ENCODE measurements at regions of chr2 and their contacts with region 1.

Region 1: GRCh38 chr2:158456309-158457066 is at the starts of genes CCDC148 and PKP4:
- DNase-seq: peak; percentile 96
- ATAC-seq: peak; percentile 95
- total RNA-seq, gene CCDC148: 0.78 TPM
- total RNA-seq, gene PKP4: 47.9 TPM

Region 2: GRCh38 chr2:158045362-158045761 is 411.1 kb before region 1 on chr2:
- intact Hi-C with region 1: loop called (anchors 10 kb)
- DNase-seq: no peak
- ATAC-seq: no peak

Region 3: DNA sequence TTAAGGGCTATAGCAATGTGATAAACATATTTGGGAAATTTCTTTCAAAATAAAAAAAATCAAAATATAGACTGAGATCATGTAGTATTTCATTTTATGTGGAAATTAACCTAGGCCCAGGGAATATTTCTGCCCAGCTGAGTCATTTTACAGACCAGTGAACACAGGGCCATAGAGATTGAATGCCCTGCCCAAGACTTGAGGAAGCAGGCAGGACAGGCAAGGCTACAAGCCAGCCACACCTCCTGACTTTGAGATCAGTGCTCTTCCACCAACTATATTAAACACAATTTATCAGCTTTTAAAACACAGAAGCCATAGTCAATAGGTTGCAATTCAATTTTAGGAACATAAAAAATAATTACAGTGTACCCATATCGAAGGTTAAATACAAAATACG is 12.9 kb before region 1 on chr2:
- intact Hi-C with region 1: no loop called
- DNase-seq: no peak
- ATAC-seq: no peak

Region 4: DNA sequence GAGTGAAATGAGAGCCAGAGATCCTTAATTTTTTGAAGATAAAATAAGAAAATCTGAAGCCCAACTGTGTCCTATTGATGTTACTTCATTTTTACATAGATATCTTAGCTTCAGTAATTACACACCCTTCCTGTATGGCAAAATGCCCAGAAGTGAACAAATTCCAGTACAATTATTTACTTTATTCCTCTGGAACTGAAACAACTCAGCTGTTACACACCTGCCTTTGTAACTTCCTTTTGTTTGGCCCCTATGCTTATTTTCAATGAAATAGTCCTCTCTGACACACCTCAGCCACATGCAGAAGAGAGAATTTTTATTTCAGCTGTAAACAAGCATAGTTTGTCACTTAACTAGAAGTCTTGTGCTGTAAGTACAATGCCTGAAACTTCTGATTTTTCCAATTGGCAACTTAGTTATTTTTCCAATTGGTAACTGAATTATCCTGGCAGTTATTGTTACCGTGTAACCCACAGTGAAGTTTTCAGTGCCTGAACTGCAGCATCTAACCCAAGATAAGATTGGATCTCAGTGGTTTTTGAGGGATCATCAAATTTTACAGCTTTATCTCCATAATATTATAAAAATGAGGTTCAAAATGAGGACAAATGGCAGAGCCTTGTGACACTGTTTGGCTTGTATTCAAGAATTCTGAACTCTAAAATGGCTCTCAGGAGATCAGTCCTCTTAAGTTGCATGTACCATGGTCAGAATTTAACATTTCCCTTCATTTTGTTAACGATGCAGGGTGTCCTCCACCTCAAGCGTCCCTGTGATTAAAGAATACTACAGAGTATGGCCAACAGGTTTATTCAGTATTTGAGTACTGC is 82.9 kb after region 1 on chr2:
- intact Hi-C with region 1: loop called (anchors 5 kb)
- DNase-seq: no peak
- ATAC-seq: peak; percentile 37

Region 5: DNA sequence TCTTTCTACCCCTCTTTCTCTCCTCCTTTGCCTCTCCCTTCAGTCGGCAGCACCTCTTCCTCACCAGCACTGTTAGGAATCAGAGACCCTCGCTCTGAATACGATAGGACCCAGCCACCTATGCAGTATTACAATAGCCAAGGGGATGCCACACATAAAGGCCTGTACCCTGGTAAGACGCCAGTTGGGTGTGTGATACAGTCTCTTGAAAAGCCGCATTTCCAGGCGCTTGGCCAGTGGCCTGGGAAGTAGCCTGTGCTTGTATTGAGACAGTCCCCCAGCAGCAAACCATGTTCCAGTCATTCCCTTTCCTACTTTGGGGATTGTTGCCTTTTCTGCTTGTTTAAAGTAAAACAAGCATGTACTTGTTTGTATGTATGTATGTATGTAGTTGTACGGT is 220.2 kb after region 1 on chr2:
- intact Hi-C with region 1: loop called (anchors 5 kb)
- DNase-seq: no peak
- ATAC-seq: peak; percentile 77

Region 6: GRCh38 chr2:158753641-158754611 is 297.4 kb after region 1 on chr2:
- intact Hi-C with region 1: loop called (anchors 2 kb)
- DNase-seq: no peak
- ATAC-seq: peak; percentile 85